ENCODE measurements at regions of chr1 and their contacts with region 1.

Region 1: GRCh38 chr1:220776720-220777326 is 9.9 kb upstream of the MTARC1 start:
- DNase-seq: peak; percentile 7 to 73 (median 48)
- ATAC-seq: peak; percentile 86
- H3K4me3 ChIP-seq: no peak overlapping the region
- H3K4me3 Mint-ChIP-seq: no peak overlapping the region
- H3K27ac ChIP-seq: no peak overlapping the region
- H3K27ac Mint-ChIP-seq: no peak overlapping the region
- H3K4me1 ChIP-seq: no peaks in the 10 kb centered on the region
- H3K4me1 Mint-ChIP-seq: peaks cover 0 to 4% (median 0%) of the 10 kb centered on the region in 7 donors
- H3K27me3 ChIP-seq: no peaks in the 10 kb centered on the region
- H3K27me3 Mint-ChIP-seq: peaks cover 6 to 23% (median 15%) of the 10 kb centered on the region in 5 donors

Region 2: GRCh38 chr1:220113136-220113695 is 663.6 kb before region 1 on chr1:
- CTCF ChIA-PET with region 1: no interaction called
- POLR2A ChIA-PET with region 1: no interaction called
- intact Hi-C with region 1: loop called in 1 of 2 experiments (anchors 2 kb)
- DNase-seq: peak in 7 of 9 donors; percentile 16 to 51 (median 30)
- ATAC-seq: peak; percentile 86
- H3K4me3 ChIP-seq: no peak overlapping the region
- H3K4me3 Mint-ChIP-seq: peak overlapping the region in 6 of 10 donors; percentile 2 to 57 (median 28)
- H3K27ac ChIP-seq: no peak overlapping the region
- H3K27ac Mint-ChIP-seq: peak overlapping the region in 2 of 9 donors; percentile 6 to 72
- H3K4me1 ChIP-seq: no peaks in the 10 kb centered on the region
- H3K4me1 Mint-ChIP-seq: peaks cover 0 to 10% (median 5%) of the 10 kb centered on the region in 7 donors
- H3K27me3 ChIP-seq: no peaks in the 10 kb centered on the region
- H3K27me3 Mint-ChIP-seq: no peaks in the 10 kb centered on the region

Region 3: DNA sequence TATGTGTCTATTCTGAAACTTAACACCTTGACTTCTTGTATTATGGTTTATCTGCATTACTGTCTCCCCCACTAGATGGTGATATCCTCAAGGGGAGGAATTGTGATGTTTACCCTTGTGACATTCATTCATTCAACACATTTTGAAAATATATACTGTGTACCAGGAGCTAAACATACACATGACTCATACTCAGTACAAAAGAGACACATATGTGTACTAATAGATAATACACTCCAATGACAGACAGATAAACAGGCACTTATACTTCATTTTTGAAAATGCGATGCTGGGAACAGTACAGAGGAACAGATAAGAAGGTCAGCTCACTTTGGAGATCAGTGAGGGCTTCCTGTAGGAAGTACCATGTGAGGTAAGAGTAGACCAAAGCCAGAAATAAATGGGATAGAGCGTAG is 495.7 kb before region 1 on chr1:
- CTCF ChIA-PET with region 1: no interaction called
- POLR2A ChIA-PET with region 1: no interaction called
- intact Hi-C with region 1: loop called in 1 of 2 experiments (anchors 5 kb)
- DNase-seq: no peak
- ATAC-seq: no peak
- H3K4me3 ChIP-seq: no peak overlapping the region
- H3K4me3 Mint-ChIP-seq: no peak overlapping the region
- H3K27ac ChIP-seq: no peak overlapping the region
- H3K27ac Mint-ChIP-seq: no peak overlapping the region
- H3K4me1 ChIP-seq: no peaks in the 10 kb centered on the region
- H3K4me1 Mint-ChIP-seq: no peaks in the 10 kb centered on the region
- H3K27me3 ChIP-seq: no peaks in the 10 kb centered on the region
- H3K27me3 Mint-ChIP-seq: peaks cover 0 to 16% (median 9%) of the 10 kb centered on the region in 5 donors

Region 4: GRCh38 chr1:220391479-220391878 is 385.3 kb before region 1 on chr1:
- CTCF ChIA-PET with region 1: no interaction called
- POLR2A ChIA-PET with region 1: no interaction called
- intact Hi-C with region 1: no loop called
- DNase-seq: no peak
- ATAC-seq: no peak
- H3K4me3 ChIP-seq: no peak overlapping the region
- H3K4me3 Mint-ChIP-seq: no peak overlapping the region
- H3K27ac ChIP-seq: no peak overlapping the region
- H3K27ac Mint-ChIP-seq: no peak overlapping the region
- H3K4me1 ChIP-seq: no peaks in the 10 kb centered on the region
- H3K4me1 Mint-ChIP-seq: no peaks in the 10 kb centered on the region
- H3K27me3 ChIP-seq: no peaks in the 10 kb centered on the region
- H3K27me3 Mint-ChIP-seq: peaks cover 2 to 38% (median 32%) of the 10 kb centered on the region in 5 donors

Region 5: DNA sequence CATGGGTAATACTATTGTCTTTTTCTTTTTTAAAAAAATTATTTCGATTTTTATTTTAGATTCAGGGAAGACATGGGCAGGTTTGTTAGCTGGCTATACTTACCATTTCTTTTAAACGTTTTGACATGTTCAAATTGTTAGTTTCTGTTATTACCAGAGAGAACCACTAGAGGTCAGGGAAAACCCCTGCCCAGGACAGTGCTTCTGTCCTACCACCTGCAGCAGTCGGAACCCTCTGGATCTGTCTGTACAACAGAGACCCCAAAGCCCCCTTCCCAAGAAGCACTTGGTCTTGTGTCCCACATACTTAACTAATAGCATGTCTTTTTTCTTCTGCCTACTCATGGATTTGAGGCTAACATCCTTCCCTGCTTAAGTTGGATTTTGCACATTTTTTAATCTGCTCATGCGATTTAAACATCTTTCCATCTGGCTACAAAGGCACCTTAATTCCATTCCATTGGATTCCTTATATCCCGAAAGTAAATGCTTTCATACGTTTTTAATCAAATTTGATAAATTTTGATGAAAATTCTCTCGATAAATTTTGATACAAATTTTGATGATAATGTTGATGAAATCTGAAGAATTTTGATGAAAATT is 96.6 kb before region 1 on chr1:
- CTCF ChIA-PET with region 1: no interaction called
- POLR2A ChIA-PET with region 1: no interaction called
- intact Hi-C with region 1: loop called in 1 of 2 experiments (anchors 1 kb)
- DNase-seq: peak in 4 of 9 donors; percentile 16 to 32 (median 26)
- ATAC-seq: peak; percentile 81
- H3K4me3 ChIP-seq: no peak overlapping the region
- H3K4me3 Mint-ChIP-seq: no peak overlapping the region
- H3K27ac ChIP-seq: no peak overlapping the region
- H3K27ac Mint-ChIP-seq: no peak overlapping the region
- H3K4me1 ChIP-seq: peaks cover 0 to 3% of the 10 kb centered on the region in 2 donors
- H3K4me1 Mint-ChIP-seq: peaks cover 0 to 5% (median 2%) of the 10 kb centered on the region in 7 donors
- H3K27me3 ChIP-seq: no peaks in the 10 kb centered on the region
- H3K27me3 Mint-ChIP-seq: peaks cover 0 to 6% (median 1%) of the 10 kb centered on the region in 5 donors